Kidney (tissue), 22 donors: ENCODE measurements at regions of chr15 and their contacts with region 1.

Region 1: GRCh38 chr15:82064824-82065223 is 19.0 kb upstream of the MEX3B start:
- DNase-seq: no peak
- H3K4me3 ChIP-seq: no peak overlapping the region
- H3K27ac ChIP-seq: no peak overlapping the region
- H3K4me1 ChIP-seq: no peaks in the 10 kb centered on the region
- H3K27me3 ChIP-seq: no peaks in the 10 kb centered on the region
- CTCF ChIP-seq: no peak

Region 2: DNA sequence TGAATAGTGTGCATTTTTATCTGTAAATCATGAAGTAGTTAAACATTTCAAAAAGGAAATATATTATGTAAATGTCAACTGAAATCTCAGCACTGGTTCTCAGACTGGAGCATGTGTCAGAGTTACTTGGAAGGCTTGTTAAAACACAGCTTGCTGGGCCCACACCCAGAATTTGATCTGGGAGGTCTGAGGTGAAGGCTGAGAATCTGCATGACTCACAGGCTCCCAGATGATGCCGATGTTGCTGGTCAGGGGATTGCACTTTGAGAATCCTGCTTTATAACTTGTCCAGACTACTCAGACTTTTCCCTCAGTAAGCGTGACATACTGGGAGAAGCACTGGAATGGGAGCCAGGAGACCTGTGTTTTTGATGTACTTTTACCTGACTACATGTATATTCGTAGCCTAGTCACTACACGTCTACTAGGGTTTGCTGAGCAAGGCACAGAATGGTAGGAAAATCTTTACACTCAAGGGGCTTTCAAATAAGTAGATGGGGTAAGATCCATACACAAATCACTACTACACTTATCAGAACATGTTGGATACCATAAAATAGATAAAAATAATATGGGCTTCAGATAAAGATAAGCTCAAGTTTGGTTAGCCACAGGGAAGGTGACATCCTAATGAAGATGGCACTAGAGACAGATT is 58.0 kb after region 1 on chr15:
- intact Hi-C with region 1: loop called (anchors 10 kb)
- DNase-seq: peak in 1 of 5 donors; percentile 40
- H3K4me3 ChIP-seq: no peak overlapping the region
- H3K27ac ChIP-seq: no peak overlapping the region
- H3K4me1 ChIP-seq: no peaks in the 10 kb centered on the region
- H3K27me3 ChIP-seq: no peaks in the 10 kb centered on the region
- CTCF ChIP-seq: no peak